ENCODE measurements at regions of chr17 and their contacts with region 1.

Region 1: DNA sequence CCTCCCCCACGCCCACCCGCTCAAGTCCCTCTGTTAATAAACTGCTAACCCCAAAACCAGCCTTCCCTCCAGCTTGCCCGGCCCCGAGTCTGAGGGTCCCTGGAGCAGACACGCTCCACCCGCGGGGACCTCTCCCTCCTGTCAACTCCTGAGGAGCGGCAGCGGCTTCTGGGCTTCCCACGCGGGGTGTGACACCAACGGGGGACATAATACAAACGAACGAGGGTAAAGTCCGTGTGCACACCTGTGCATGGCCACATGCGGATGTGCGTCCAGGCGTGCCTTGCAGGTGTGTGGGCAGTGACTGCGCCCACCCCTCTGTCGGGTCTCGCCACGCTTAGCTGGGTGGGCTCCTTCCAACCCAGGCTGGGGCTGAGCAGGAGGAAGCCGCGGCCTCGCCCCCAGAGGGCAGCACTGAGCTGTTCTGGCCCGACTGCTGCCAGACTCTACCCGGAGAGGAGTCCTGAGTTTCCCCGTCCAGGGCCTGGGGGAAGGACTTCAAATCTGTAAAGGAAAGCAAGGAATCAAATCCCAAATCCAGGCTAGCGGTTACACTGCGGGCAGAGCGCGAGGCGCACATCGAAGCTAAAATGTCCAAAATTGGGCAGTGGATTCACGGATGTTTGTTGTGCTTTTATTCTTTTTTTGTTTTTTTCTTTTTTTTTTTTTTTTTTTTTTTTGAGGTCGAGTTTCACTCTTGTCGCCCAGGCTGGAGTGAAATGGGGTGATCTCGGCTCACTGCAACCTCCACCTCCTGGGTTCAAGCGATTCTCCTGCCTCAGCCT is 24.2 kb upstream of the KRT17 start:
- DNase-seq: peak; percentile 94
- ATAC-seq: peak; percentile 81
- H3K4me3 Mint-ChIP-seq: peak overlapping the region; percentile 71
- H3K27ac Mint-ChIP-seq: no peak overlapping the region
- H3K4me1 Mint-ChIP-seq: peaks cover 2% of the 10 kb centered on the region
- H3K27me3 Mint-ChIP-seq: no peaks in the 10 kb centered on the region
- CTCF ChIP-seq: peak; percentile 90

Region 2: GRCh38 chr17:41486809-41487720 is 161.5 kb before region 1 on chr17:
- CTCF ChIA-PET with region 1: interaction called, 32 read pairs
- POLR2A ChIA-PET with region 1: no interaction called
- DNase-seq: peak; percentile 92
- ATAC-seq: peak; percentile 96
- H3K4me3 Mint-ChIP-seq: no peak overlapping the region
- H3K27ac Mint-ChIP-seq: no peak overlapping the region
- H3K4me1 Mint-ChIP-seq: no peaks in the 10 kb centered on the region
- H3K27me3 Mint-ChIP-seq: peaks cover 17% of the 10 kb centered on the region
- CTCF ChIP-seq: peak; percentile 50

Region 3: GRCh38 chr17:41559548-41559947 is 89.1 kb before region 1 on chr17:
- CTCF ChIA-PET with region 1: interaction called, 319 read pairs
- POLR2A ChIA-PET with region 1: interaction called, 12 read pairs
- DNase-seq: no peak
- ATAC-seq: no peak
- H3K4me3 Mint-ChIP-seq: no peak overlapping the region
- H3K27ac Mint-ChIP-seq: no peak overlapping the region
- H3K4me1 Mint-ChIP-seq: peaks cover under 1% of the 10 kb centered on the region; the same call in 1 of the 2 replicates
- H3K27me3 Mint-ChIP-seq: no peaks in the 10 kb centered on the region; the same call in 1 of the 2 replicates
- CTCF ChIP-seq: no peak

Region 4: GRCh38 chr17:41593311-41593981 is 55.2 kb before region 1 on chr17:
- CTCF ChIA-PET with region 1: interaction called, 13 read pairs
- POLR2A ChIA-PET with region 1: interaction called, 4 read pairs
- DNase-seq: no peak
- ATAC-seq: no peak
- H3K4me3 Mint-ChIP-seq: no peak overlapping the region
- H3K27ac Mint-ChIP-seq: no peak overlapping the region
- H3K4me1 Mint-ChIP-seq: peaks cover 3% of the 10 kb centered on the region
- H3K27me3 Mint-ChIP-seq: no peaks in the 10 kb centered on the region; the same call in 1 of the 2 replicates
- CTCF ChIP-seq: no peak

Region 5: GRCh38 chr17:41624208-41625101 is 24.1 kb before region 1 on chr17 and contains the start of gene KRT17:
- CTCF ChIA-PET with region 1: interaction called, 29 read pairs
- POLR2A ChIA-PET with region 1: no interaction called
- DNase-seq: no peak
- ATAC-seq: peak; percentile 60
- H3K4me3 Mint-ChIP-seq: no peak within 1 kb of the TSS
- H3K27ac Mint-ChIP-seq: no peak within 1 kb of the TSS
- H3K4me1 Mint-ChIP-seq: peaks cover 14% of the 10 kb centered on the region
- H3K27me3 Mint-ChIP-seq: no peaks in the 10 kb centered on the region
- CTCF ChIP-seq: no peak
- total RNA-seq, gene KRT17: 0.53 to 1.5 TPM (median 0.92 TPM) in 3 replicates

Region 6: GRCh38 chr17:41738077-41738735 is 89.6 kb after region 1 on chr17:
- CTCF ChIA-PET with region 1: no interaction called
- POLR2A ChIA-PET with region 1: no interaction called
- DNase-seq: peak; percentile 91
- ATAC-seq: peak; percentile 71
- H3K4me3 Mint-ChIP-seq: no peak overlapping the region
- H3K27ac Mint-ChIP-seq: peak overlapping the region; percentile 82
- H3K4me1 Mint-ChIP-seq: peaks cover 22% of the 10 kb centered on the region
- H3K27me3 Mint-ChIP-seq: peaks cover 47% of the 10 kb centered on the region
- CTCF ChIP-seq: peak; percentile 98

Region 7: DNA sequence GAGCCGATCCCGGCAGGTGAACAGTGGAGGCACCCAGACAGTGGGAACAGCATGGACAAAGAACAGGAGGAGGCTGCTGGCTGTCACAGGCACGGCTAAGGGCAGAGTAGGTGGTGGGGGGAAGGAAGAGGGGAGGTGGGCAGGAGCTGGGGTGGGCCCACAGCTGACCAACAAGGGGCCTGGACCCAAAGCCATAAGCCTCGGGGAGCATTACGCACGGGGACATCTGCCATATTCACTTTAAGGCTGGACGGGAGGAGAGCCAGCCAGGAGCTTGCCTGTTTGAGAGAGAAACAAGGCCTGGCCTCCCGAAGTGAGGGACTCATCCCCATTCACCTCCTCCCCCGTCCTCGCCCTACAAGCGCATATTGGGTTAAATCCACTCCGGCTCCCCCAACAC is 105.5 kb after region 1 on chr17:
- CTCF ChIA-PET with region 1: no interaction called
- POLR2A ChIA-PET with region 1: no interaction called
- DNase-seq: no peak
- ATAC-seq: no peak
- H3K4me3 Mint-ChIP-seq: no peak overlapping the region
- H3K27ac Mint-ChIP-seq: no peak overlapping the region
- H3K4me1 Mint-ChIP-seq: no peaks in the 10 kb centered on the region
- H3K27me3 Mint-ChIP-seq: no peaks in the 10 kb centered on the region; the same call in 1 of the 2 replicates
- CTCF ChIP-seq: no peak